H1 (cell line): ENCODE measurements at regions of chr6 and their contacts with region 1.

Region 1: GRCh38 chr6:351011-351755 is 40.4 kb upstream of the IRF4 start:
- DNase-seq: no peak
- H3K4me3 ChIP-seq: no peak overlapping the region
- H3K27ac ChIP-seq: no peak overlapping the region
- H3K4me1 ChIP-seq: no peaks in the 10 kb centered on the region; a peak in 2 of 7 replicates
- H3K27me3 ChIP-seq: no peaks in the 10 kb centered on the region; a peak in 2 of 7 replicates
- CTCF ChIP-seq: peak in 1 of 3 experiments; percentile 30; a peak in 2 of 4 replicates
- EP300 ChIP-seq: no peak
- POLR2A ChIP-seq: no peak
- RAD21 ChIP-seq: peak; percentile 14 to 33; a peak in 3 of 4 replicates

Region 2: DNA sequence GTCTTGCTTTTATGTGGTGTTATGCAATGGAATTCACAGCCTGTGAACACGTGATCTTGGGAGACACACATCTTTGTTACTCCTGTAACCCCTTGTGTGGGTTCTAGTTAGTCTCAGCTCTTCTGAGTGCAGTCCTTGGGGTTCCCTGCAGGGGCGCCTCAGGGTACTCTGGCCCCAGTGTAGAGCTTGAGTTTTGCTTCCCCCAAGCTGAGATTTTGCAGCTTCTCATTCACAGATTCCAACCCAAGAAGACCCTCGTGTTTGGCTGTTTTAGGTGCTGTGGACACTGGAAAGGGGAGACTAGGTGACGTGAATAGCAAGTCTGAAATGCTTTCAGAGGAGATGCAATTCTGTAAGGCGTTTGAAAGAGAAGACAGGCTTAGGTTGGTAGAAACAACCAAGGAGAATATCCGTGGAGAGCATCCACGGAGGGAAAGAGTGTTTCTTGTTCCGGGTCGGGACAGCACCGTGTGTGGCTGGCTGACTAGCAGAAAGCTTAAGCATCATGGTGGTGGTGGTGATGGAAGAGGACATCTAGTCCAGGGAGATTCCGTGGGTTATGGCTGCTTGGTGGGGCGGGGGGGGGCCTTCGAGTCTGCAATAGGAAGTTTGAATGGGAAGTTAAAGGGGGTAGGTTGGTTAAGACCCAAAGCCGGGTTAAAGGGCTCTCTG is 28.8 kb before region 1 on chr6:
- CTCF ChIA-PET with region 1: interaction called, 12 read pairs
- POLR2A ChIA-PET with region 1: no interaction called
- DNase-seq: no peak
- H3K4me3 ChIP-seq: no peak overlapping the region
- H3K27ac ChIP-seq: no peak overlapping the region
- H3K4me1 ChIP-seq: peaks cover 0 to 5% (median 3%) of the 10 kb centered on the region in 4 experiments; a peak in 3 of 7 replicates
- H3K27me3 ChIP-seq: no peaks in the 10 kb centered on the region; a peak in 2 of 7 replicates
- CTCF ChIP-seq: peak; percentile 20 to 43 (median 26)
- EP300 ChIP-seq: no peak
- POLR2A ChIP-seq: no peak
- RAD21 ChIP-seq: no peak; a peak in 2 of 4 replicates

Region 3: GRCh38 chr6:364609-365540 is 13.7 kb after region 1 on chr6:
- CTCF ChIA-PET with region 1: interaction called, 48 read pairs
- POLR2A ChIA-PET with region 1: no interaction called
- DNase-seq: no peak
- H3K4me3 ChIP-seq: no peak overlapping the region
- H3K27ac ChIP-seq: no peak overlapping the region
- H3K4me1 ChIP-seq: no peaks in the 10 kb centered on the region
- H3K27me3 ChIP-seq: no peaks in the 10 kb centered on the region; a peak in 1 of 7 replicates
- CTCF ChIP-seq: no peak
- EP300 ChIP-seq: no peak
- POLR2A ChIP-seq: no peak
- RAD21 ChIP-seq: no peak

Region 4: GRCh38 chr6:373751-374724 is 22.9 kb after region 1 on chr6:
- CTCF ChIA-PET with region 1: interaction called, 11 read pairs
- POLR2A ChIA-PET with region 1: interaction called, 3 read pairs
- DNase-seq: no peak
- H3K4me3 ChIP-seq: no peak overlapping the region
- H3K27ac ChIP-seq: no peak overlapping the region
- H3K4me1 ChIP-seq: peaks cover 0 to 6% (median 0%) of the 10 kb centered on the region in 4 experiments; a peak in 2 of 7 replicates
- H3K27me3 ChIP-seq: no peaks in the 10 kb centered on the region; a peak in 1 of 7 replicates
- CTCF ChIP-seq: no peak; a peak in 1 of 4 replicates
- EP300 ChIP-seq: no peak
- POLR2A ChIP-seq: no peak
- RAD21 ChIP-seq: peak; percentile 47 to 52